Ascending aorta (tissue), 2 donors: ENCODE measurements at regions of chr3 and their contacts with region 1.

Region 1: GRCh38 chr3:73100741-73101559 is 39.5 kb downstream of the EBLN2 start:
- DNase-seq: peak in 1 of 2 donors; percentile 90
- H3K4me3 ChIP-seq: no peak overlapping the region
- H3K27ac ChIP-seq: no peak overlapping the region
- H3K4me1 ChIP-seq: no peaks in the 10 kb centered on the region
- H3K27me3 ChIP-seq: no peaks in the 10 kb centered on the region
- CTCF ChIP-seq: peak; percentile 72 to 96 (median 94)

Region 2: DNA sequence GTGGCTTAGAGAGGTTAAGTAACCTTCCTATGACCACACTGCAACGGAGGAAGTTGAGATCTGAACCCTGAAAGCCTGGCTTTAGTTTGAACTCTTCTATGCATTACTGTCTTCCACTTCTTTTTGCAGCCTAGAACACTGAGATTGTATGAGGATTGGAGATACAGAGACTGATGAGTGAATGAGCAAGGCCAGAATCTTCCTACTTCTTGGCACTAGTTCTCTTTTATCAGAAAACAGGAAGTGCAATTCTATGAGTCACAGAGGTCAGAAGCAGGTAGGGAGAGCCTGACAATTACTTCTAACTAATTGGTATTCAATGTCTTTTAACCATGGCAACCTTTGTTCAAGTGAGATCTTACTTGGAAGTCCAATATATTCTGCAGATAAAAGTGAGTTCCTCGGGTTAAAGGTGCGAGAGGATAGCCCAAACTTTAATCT is 471.7 kb before region 1 on chr3:
- intact Hi-C with region 1: no loop called
- DNase-seq: no peak
- H3K4me3 ChIP-seq: no peak overlapping the region
- H3K27ac ChIP-seq: no peak overlapping the region
- H3K4me1 ChIP-seq: no peaks in the 10 kb centered on the region
- H3K27me3 ChIP-seq: no peaks in the 10 kb centered on the region
- CTCF ChIP-seq: no peak

Region 3: GRCh38 chr3:72912532-72912931 is 188.4 kb before region 1 on chr3:
- intact Hi-C with region 1: no loop called
- DNase-seq: no peak
- H3K4me3 ChIP-seq: no peak overlapping the region
- H3K27ac ChIP-seq: peak overlapping the region; percentile 62 to 77
- H3K4me1 ChIP-seq: peaks cover 13 to 45% of the 10 kb centered on the region in 2 donors
- H3K27me3 ChIP-seq: no peaks in the 10 kb centered on the region
- CTCF ChIP-seq: no peak

Region 4: DNA sequence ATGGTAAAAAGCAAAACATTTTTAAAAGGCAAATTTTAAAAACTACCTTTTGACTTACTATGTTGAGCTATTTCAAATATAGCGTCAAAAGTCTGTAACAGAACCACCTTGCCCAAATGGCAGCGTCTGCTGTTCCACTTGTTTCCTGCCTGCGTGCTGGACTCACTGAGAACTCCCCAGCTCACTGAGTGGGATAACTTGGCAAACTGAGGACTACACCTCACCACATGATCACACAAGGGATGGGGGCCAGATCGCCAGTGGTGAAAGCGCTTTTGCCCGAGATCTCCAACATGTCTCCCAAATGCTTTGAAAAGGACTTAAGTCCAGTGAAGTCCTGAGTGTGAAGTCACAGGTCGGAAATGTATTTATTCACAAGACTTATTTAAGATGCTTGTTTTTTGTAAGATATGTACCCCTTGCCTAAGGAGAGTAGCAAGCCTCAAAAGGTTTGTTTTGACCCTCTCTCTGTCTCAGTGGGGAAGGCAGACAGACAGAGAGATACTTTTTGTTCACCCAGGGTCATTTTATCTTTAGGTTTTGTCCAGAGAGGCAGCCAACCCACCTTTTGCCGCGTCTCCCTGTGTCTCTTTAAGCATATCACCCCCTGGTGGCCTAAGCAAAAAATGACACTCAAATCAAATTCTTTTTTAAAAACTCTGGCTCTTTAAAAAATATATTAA is 331.2 kb after region 1 on chr3:
- intact Hi-C with region 1: loop called (anchors 1 kb)
- DNase-seq: no peak
- H3K4me3 ChIP-seq: peak overlapping the region in 1 of 2 donors; percentile 30
- H3K27ac ChIP-seq: no peak overlapping the region
- H3K4me1 ChIP-seq: peaks cover 0 to 18% of the 10 kb centered on the region in 2 donors
- H3K27me3 ChIP-seq: no peaks in the 10 kb centered on the region
- CTCF ChIP-seq: peak; percentile 48 to 64 (median 51)

Region 5: DNA sequence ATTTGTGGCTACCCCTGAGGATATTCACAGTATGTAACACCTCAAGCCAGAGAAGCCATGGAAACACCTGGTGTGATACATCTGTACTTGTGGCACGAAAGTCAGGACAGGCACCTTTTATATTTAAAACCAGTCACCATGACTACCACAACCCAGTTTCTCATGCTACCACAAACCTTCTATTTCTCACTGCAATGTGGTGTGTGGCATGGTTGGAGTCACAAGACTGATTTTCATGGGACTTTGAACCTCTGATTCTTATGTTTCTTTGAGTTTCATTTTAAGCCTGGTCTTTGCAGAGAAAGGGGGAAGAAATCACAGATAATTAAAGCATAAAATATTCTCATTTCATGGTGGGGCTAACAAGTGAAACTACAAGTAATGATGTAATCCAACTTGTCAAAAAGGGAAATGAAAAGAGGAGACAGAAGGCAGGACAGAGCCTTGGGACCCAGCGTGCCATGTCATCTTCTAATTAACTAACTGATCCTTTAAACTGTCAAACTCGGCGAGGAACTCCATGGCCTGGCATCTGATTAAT is 347.9 kb after region 1 on chr3:
- intact Hi-C with region 1: loop called (anchors 5 kb)
- DNase-seq: no peak
- H3K4me3 ChIP-seq: no peak overlapping the region
- H3K27ac ChIP-seq: no peak overlapping the region
- H3K4me1 ChIP-seq: peaks cover under 1 to 30% of the 10 kb centered on the region in 2 donors
- H3K27me3 ChIP-seq: no peaks in the 10 kb centered on the region
- CTCF ChIP-seq: no peak

Region 6: GRCh38 chr3:73502609-73503583 is 401.9 kb after region 1 on chr3:
- intact Hi-C with region 1: loop called (anchors 1 kb)
- DNase-seq: peak in 1 of 2 donors; percentile 79
- H3K4me3 ChIP-seq: peak overlapping the region; percentile 1 to 37
- H3K27ac ChIP-seq: peak overlapping the region; percentile 61 to 71
- H3K4me1 ChIP-seq: peaks cover 0 to 35% of the 10 kb centered on the region in 2 donors
- H3K27me3 ChIP-seq: no peaks in the 10 kb centered on the region
- CTCF ChIP-seq: peak; percentile 74 to 85 (median 84)

Region 7: GRCh38 chr3:73848173-73848906 is 747.4 kb after region 1 on chr3:
- intact Hi-C with region 1: loop called (anchors 5 kb)
- DNase-seq: no peak
- H3K4me3 ChIP-seq: no peak overlapping the region
- H3K27ac ChIP-seq: no peak overlapping the region
- H3K4me1 ChIP-seq: peaks cover 0 to 2% of the 10 kb centered on the region in 2 donors
- H3K27me3 ChIP-seq: no peaks in the 10 kb centered on the region
- CTCF ChIP-seq: peak; percentile 37 to 77 (median 63)